ENCODE measurements at regions of chr1 and their contacts with region 1.

Region 1: DNA sequence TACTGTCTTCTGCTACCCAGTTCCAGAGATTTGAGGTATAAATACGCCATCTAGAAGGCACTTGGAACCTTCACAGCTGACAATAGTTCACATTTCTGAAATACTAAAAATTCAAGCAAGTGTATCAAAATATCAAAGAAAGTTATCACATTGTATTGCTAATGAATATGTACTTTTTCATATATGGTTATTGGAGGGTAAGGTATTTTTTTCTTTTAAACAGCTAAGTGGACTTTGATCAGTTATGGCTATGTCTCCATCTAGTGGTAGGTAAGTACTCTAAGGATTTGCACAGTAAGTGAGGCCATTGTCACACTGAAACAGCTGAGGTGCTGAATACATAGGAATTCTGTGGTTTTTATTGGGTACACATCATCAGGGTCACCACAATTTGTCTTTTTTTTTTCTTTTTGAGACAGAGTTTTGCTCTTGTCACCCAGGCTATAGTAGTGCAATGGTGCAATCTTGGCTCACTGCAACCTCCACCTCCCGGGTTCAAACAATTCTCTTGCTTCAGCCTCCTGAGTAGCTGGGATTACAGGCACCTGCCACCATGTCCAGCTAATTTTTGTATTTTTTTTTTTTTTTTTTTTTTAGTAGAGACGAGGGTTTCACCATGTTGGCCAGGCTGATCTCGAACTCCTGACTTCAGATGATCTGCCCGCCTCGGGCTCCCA is 49.1 kb upstream of the CR2 start:
- DNase-seq: peak; percentile 83
- H3K4me3 Mint-ChIP-seq: no peak overlapping the region
- H3K27ac Mint-ChIP-seq: no peak overlapping the region
- H3K4me1 Mint-ChIP-seq: peaks cover 5% of the 10 kb centered on the region
- H3K27me3 Mint-ChIP-seq: no peaks in the 10 kb centered on the region
- CTCF ChIP-seq: peak; percentile 99

Region 2: GRCh38 chr1:207181838-207182237 is 223.1 kb before region 1 on chr1:
- CTCF ChIA-PET with region 1: interaction called, 62 read pairs
- POLR2A ChIA-PET with region 1: interaction called, 15 read pairs
- intact Hi-C with region 1: loop called (anchors 1 kb)
- DNase-seq: peak; percentile 66
- H3K4me3 Mint-ChIP-seq: no peak overlapping the region
- H3K27ac Mint-ChIP-seq: no peak overlapping the region
- H3K4me1 Mint-ChIP-seq: no peaks in the 10 kb centered on the region
- H3K27me3 Mint-ChIP-seq: no peaks in the 10 kb centered on the region
- CTCF ChIP-seq: peak; percentile 84

Region 3: GRCh38 chr1:207214453-207214852 is 190.5 kb before region 1 on chr1:
- CTCF ChIA-PET with region 1: no interaction called
- POLR2A ChIA-PET with region 1: no interaction called
- intact Hi-C with region 1: no loop called
- DNase-seq: no peak
- H3K4me3 Mint-ChIP-seq: no peak overlapping the region
- H3K27ac Mint-ChIP-seq: no peak overlapping the region
- H3K4me1 Mint-ChIP-seq: peaks cover 13% of the 10 kb centered on the region
- H3K27me3 Mint-ChIP-seq: no peaks in the 10 kb centered on the region
- CTCF ChIP-seq: no peak

Region 4: DNA sequence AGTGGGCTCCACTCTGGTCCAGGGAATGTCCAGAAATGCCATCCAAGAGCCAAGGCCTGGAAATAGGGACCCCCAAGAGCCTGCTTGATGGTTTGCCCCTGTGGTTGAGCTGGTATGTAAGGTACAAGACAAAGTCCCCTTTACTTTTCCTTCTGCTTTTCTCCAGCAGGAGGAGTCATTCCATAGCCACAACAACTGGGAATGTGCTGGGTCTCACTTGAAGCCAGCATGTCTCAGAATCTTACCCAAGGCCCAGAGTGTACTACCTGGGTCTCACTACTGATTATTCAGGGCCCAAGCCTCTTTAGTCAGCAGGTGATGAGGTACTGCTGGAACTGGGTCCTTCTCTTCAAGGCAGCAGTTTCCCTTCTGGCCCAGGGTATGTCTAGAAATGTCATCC is 145.6 kb before region 1 on chr1:
- CTCF ChIA-PET with region 1: interaction called, 4 read pairs
- POLR2A ChIA-PET with region 1: interaction called, 4 read pairs
- intact Hi-C with region 1: loop called (anchors 1 kb)
- DNase-seq: peak; percentile 77
- H3K4me3 Mint-ChIP-seq: no peak overlapping the region
- H3K27ac Mint-ChIP-seq: no peak overlapping the region
- H3K4me1 Mint-ChIP-seq: no peaks in the 10 kb centered on the region
- H3K27me3 Mint-ChIP-seq: no peaks in the 10 kb centered on the region
- CTCF ChIP-seq: peak; percentile 71

Region 5: GRCh38 chr1:207336559-207337467 is 68.2 kb before region 1 on chr1:
- CTCF ChIA-PET with region 1: interaction called, 20 read pairs
- POLR2A ChIA-PET with region 1: interaction called, 3 read pairs
- intact Hi-C with region 1: no loop called
- DNase-seq: peak; percentile 39
- H3K4me3 Mint-ChIP-seq: no peak overlapping the region
- H3K27ac Mint-ChIP-seq: peak overlapping the region; percentile 21
- H3K4me1 Mint-ChIP-seq: peaks cover 22% of the 10 kb centered on the region
- H3K27me3 Mint-ChIP-seq: no peaks in the 10 kb centered on the region
- CTCF ChIP-seq: no peak

Region 6: DNA sequence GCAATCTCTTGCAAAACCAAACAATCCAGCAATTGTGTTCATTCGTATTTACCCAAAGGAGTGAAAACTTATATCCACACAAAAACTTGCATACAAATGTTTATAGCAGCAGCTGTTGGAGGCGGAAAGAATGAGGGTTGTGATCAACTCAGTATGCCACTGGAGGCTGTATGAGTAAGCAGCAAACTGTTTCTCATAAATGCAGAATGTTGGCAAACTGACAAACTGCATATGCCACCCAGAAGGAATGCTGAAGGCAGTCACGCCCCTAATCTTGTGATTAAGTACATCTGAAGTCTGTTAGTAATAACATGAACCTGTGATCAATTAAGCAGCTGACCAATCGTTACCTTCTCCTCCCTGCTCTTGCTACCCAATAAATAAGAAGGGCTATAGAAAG is 11.4 kb before region 1 on chr1:
- CTCF ChIA-PET with region 1: interaction called, 32 read pairs
- POLR2A ChIA-PET with region 1: interaction called, 7 read pairs
- intact Hi-C with region 1: no loop called
- DNase-seq: peak; percentile 93
- H3K4me3 Mint-ChIP-seq: peak overlapping the region; percentile 37
- H3K27ac Mint-ChIP-seq: peak overlapping the region; percentile 30
- H3K4me1 Mint-ChIP-seq: peaks cover 23% of the 10 kb centered on the region
- H3K27me3 Mint-ChIP-seq: no peaks in the 10 kb centered on the region
- CTCF ChIP-seq: no peak

Region 7: DNA sequence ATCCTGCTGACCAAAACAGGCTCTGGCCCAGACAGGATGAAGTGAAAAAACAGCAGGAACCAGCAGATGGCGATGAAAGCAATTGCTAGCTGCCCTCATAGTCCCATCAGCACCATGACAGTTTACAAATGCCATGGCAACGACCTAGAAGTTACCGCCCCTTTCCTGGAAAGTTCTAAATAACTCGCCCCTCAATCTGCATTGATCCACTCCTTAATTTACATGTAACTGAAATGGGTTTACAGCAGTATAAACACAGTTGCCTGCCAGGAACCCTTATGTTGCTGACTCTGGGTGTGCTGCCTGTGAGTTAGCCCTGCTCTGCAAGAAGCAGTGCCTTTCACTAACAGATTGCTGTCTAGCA is 174.4 kb after region 1 on chr1:
- CTCF ChIA-PET with region 1: no interaction called
- POLR2A ChIA-PET with region 1: no interaction called
- intact Hi-C with region 1: no loop called
- DNase-seq: peak; percentile 83
- H3K4me3 Mint-ChIP-seq: no peak overlapping the region
- H3K27ac Mint-ChIP-seq: no peak overlapping the region
- H3K4me1 Mint-ChIP-seq: no peaks in the 10 kb centered on the region
- H3K27me3 Mint-ChIP-seq: peaks cover 25% of the 10 kb centered on the region
- CTCF ChIP-seq: peak; percentile 74

Region 8: DNA sequence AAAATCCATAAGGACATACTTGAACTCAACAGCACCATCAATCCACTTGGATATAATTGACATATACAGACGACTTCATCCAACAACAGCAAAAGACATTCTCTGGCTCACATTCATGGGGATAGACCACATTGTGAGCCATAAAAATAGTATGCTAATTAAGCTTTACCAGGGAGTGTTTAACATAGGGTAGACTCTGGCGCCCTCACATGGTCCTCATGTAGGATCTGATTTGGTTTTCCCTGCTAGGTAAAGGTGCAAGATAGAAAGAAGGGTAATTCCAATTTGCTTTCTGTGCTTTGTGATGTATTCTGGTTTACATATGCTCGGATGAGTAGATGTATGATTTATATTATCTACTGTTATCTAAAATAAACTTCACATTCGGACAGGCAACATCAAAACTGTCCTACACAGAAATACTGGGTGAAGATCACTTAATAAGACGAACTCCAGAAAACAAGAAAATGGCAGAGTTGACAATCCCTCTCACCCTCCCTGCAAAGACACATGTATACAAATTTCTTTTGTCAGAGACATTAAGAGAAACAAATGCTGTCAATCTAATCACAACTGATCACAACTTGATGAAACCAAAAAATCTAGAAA is 267.6 kb after region 1 on chr1:
- CTCF ChIA-PET with region 1: no interaction called
- POLR2A ChIA-PET with region 1: no interaction called
- intact Hi-C with region 1: loop called (anchors 5 kb)
- DNase-seq: peak; percentile 86
- H3K4me3 Mint-ChIP-seq: no peak overlapping the region
- H3K27ac Mint-ChIP-seq: no peak overlapping the region
- H3K4me1 Mint-ChIP-seq: peaks cover 12% of the 10 kb centered on the region
- H3K27me3 Mint-ChIP-seq: peaks cover 75% of the 10 kb centered on the region
- CTCF ChIP-seq: peak; percentile 90